Left cardiac atrium (tissue), 4 donors: ENCODE measurements at regions of chr20 and their contacts with region 1.

Region 1: DNA sequence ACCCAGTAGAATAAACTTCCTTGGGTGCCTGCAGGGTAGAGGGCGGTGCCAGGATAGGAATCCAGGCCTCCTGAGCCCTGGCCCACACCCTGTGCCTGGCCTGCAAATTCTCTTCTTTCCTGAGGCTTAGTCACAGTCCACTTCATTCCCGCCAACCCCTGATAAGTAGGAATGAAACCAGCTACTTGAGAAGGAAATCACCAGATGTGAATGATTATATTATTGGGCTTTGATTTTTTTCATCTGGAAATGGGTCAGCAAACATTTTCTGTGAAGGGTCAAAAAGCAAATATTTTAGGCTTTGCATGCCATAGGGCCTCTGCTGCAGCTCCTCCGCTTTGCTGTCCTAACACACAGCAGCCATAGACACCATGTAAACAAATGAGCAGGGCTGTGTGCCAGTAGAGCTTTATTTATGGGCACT is 50.2 kb downstream of the STK35 start:
- DNase-seq: peak; percentile 52
- ATAC-seq: peak; percentile 82 to 95

Region 2: DNA sequence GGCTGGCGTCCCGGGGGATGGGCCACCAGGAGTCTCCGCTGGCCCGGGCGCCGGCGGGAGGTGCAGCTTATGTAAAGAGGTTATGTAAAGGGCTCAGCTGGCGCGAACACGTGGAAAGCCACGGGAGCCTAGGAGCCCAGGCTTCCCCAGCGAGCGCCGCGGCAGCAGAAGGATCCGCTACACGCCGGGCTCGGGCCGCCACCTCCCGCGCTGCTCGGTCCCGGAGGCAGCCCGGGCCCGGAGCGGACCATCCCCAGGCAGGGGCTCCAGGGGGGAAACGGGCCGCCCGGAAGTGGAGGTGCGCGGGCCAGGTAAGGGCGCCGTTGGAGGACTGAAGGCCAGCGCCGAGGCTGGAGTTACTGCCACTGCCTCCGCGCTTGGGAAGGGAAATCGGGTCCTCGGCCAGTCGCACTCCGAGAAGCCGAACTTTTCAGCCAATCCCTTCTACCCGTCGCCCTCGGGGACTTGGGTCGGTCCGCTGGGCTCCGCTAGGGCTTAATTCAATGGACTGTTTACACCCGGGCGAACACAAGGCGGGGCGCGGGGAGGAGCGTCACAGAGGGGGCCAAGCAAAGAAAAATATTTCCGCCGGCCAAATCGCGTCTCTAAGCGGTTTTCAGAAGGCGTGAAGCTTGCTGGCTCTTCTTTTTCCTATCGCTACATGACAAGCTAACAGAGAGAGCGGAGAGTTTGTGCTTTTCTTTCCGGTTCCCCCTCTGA is 49.8 kb before region 1 on chr20:
- intact Hi-C with region 1: loop called (anchors 5 kb)
- DNase-seq: peak; percentile 94
- ATAC-seq: peak; percentile 91 to 94

Region 3: DNA sequence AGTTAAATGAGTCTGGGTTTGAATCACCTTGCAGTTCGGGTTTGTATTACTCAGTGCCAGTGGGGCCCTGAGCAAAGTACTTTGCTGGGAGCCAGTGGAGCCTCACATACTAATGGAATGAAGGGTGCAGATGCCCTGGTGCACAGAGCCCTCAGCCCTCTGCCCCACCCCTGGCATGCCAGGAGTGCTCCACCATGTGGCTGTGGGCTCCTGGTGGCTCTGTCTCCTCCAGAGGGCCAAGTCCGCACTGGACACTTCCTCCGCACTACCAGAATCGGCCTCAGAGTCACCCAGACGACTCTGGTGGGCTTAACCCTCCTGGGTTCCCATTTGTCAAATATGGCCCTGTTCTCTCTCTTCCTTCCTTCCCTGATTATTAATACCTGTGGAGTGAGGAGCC is 43.7 kb after region 1 on chr20:
- intact Hi-C with region 1: no loop called
- DNase-seq: no peak
- ATAC-seq: no peak

Region 4: DNA sequence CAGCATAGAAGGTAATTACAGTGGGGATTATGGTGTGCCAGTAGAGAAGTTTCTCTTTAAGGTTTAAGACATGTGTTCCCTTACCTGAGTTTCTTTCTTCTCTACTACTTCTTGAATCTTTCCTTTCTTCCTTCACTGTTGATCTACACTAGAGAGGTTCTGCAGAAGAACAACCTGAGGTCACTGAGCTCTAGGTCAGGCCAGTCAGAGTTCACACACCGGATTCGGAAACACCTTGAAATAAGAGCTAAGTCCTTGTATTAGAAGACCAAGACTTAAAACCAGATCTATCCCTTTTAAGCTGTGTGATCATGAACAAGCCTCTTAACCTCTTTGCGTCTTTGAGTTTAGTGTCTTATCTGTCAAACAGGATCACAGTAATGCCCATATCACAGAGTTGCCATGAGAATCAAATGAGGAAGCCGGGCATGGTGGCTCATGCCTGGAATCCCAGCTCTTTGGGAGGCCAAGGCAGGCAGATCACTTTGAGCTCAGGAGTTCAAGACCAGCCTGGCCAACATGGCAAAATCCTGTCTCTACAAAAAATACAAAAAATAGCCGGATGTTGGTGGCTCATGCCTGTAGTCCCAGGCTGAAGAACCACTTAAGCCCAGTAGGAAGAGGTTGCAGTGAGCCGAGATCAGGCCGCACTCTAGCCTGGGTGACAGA is 121.9 kb after region 1 on chr20:
- intact Hi-C with region 1: no loop called
- DNase-seq: no peak
- ATAC-seq: no peak

Region 5: GRCh38 chr20:2523919-2524708 is 372.2 kb after region 1 on chr20:
- intact Hi-C with region 1: no loop called
- DNase-seq: peak; percentile 88
- ATAC-seq: peak; percentile 81 to 84